Common myeloid progenitor, CD34-positive (primary cell): ENCODE measurements at regions of chrX and their contacts with region 1.

Region 1: DNA sequence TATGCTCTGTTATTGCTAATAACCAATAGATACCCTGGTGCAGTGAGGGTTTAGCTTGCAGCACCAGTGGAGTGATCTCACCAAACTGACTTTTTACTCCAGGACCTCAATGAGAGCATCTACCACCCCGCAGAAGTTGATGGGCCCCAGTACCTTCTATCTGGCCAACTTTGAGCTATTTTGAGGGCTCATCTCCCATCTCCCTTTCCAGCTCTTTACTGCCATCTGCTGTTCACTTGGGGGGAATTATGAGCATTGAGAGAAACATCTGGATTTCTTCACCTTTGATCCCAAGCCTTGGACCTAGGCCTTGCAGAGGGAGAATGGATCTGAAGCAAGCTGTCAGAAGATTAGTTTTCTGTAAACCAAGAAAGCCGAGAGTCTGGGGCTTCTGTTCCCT is 143.6 kb downstream of the TMEM164 start:
- DNase-seq: peak; percentile 28 to 67 (median 55)
- H3K4me3 ChIP-seq: no peak overlapping the region
- H3K27ac ChIP-seq: no peak overlapping the region
- H3K4me1 ChIP-seq: peaks cover 0 to 8% (median 3%) of the 10 kb centered on the region in 4 experiments
- H3K27me3 ChIP-seq: no peaks in the 10 kb centered on the region

Region 2: DNA sequence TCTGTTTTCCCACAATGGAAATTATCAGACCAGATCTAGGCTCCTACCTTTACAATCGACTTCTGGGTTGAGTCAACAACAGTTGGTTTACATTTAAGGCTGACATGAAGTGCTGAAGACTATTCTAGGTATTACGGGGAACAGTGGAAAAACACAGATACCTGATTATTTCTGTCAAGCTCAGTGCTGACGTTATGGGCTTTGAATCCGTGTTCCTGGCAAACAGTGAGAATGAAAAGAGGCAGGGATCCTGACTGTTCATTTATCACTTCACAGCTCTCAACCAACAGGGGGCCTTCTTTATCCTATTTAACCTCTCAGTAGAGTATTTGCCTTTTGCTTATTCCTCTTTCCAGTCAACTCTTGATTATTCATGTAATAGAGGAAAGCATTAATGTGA is 100.5 kb before region 1 on chrX:
- CTCF ChIA-PET with region 1: interaction called, 15 read pairs
- POLR2A ChIA-PET with region 1: no interaction called
- DNase-seq: no peak
- H3K4me3 ChIP-seq: no peak overlapping the region
- H3K27ac ChIP-seq: no peak overlapping the region
- H3K4me1 ChIP-seq: peaks cover 0 to 4% (median 3%) of the 10 kb centered on the region in 4 experiments
- H3K27me3 ChIP-seq: no peaks in the 10 kb centered on the region

Region 3: DNA sequence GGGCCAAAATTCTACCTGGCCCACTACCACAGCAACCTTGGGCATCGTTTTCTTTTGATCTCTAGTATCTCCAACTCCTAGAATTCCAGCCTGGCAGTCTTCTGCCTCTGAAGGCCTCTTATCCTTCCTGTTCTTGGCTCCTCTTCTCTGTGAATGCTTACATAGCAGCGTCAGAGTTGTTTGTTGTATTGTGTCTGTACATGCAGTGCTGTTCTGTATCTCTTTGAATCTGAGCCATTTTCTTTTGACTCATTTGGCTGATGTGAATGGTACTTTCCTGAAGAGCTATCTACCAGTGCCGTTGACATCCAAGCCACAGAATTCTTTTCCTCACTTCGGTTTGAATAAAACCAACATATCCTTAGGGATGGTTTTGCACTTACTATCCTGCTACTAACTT is 64.4 kb before region 1 on chrX:
- CTCF ChIA-PET with region 1: no interaction called
- POLR2A ChIA-PET with region 1: no interaction called
- DNase-seq: no peak
- H3K4me3 ChIP-seq: no peak overlapping the region
- H3K27ac ChIP-seq: no peak overlapping the region
- H3K4me1 ChIP-seq: peaks cover 0 to 16% (median 6%) of the 10 kb centered on the region in 4 experiments
- H3K27me3 ChIP-seq: peaks cover 0 to 4% (median 0%) of the 10 kb centered on the region in 5 experiments